CD14-positive monocyte (primary cell): ENCODE measurements at regions of chr14 and their contacts with region 1.

Region 1: GRCh38 chr14:105314287-105315200 is at the start of gene PACS2:
- DNase-seq: peak; percentile 83 to 89 (median 85)
- H3K4me3 ChIP-seq: peak within 1 kb of the TSS; percentile 41 to 79 (median 48)
- H3K4me3 Mint-ChIP-seq: peak within 1 kb of the TSS; percentile 85 to 87
- H3K27ac ChIP-seq: peak within 1 kb of the TSS; percentile 29 to 68
- H3K27ac Mint-ChIP-seq: peak within 1 kb of the TSS in 6 of 7 donors; percentile 41 to 86 (median 77)
- H3K4me1 ChIP-seq: peaks cover 35 to 46% of the 10 kb centered on the region in 2 donors
- H3K4me1 Mint-ChIP-seq: peaks cover 36% of the 10 kb centered on the region
- H3K27me3 ChIP-seq: no peaks in the 10 kb centered on the region
- H3K27me3 Mint-ChIP-seq: peaks cover 3 to 11% (median 4%) of the 10 kb centered on the region in 3 donors
- CTCF ChIP-seq: no peak
- polyA plus RNA-seq, gene PACS2: 3.1 to 87.0 (median 3.7) TPM

Region 2: DNA sequence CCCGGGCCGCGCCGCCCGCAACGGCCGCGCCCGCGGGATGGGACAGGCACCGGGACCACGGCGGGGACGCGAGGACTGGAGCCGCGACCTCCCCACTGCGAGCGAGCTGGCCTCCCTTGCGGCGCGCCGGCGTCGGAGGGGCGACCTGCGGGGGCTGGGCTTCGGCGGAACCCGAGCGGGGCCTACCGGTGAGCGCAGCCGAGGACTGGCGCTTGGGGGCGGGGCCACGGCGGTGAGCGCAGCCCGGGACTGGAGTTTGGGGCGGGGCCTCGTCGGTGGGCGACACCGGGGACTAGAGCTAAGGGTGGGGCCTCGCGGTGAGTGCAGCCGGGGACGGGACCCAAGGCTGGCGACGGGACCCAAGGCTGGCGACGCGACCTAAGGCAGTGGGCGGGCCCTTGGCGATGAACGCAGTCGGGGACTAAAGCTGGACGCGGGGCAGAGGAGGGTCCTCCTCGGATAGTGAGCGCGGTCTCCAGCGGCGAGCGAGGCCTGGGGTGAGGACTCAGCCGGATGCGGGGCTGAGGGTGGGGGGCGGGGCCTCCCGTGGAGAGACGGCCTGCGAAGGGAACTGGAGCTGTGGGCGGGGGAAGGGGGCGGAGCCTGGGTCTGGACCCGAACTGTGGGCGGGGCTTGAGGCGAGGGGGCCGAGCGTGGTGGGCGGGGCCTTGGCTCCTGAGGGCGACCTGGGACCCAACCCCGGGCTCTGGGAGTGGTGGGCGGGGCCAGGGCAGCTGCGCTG is 13.6 kb before region 1 on chr14 and contains the start of gene BRF1:
- intact Hi-C with region 1: loop called in 1 of 2 experiments (anchors 2 kb)
- DNase-seq: peak; percentile 90 to 93 (median 90)
- H3K4me3 ChIP-seq: peak within 1 kb of the TSS; percentile 66 to 87 (median 76)
- H3K4me3 Mint-ChIP-seq: peak within 1 kb of the TSS; percentile 85 to 95
- H3K27ac ChIP-seq: peak within 1 kb of the TSS; percentile 92 to 93
- H3K27ac Mint-ChIP-seq: peak within 1 kb of the TSS; percentile 91 to 98 (median 95)
- H3K4me1 ChIP-seq: peaks cover 32 to 43% of the 10 kb centered on the region in 2 donors
- H3K4me1 Mint-ChIP-seq: peaks cover 45% of the 10 kb centered on the region
- H3K27me3 ChIP-seq: no peaks in the 10 kb centered on the region
- H3K27me3 Mint-ChIP-seq: peaks cover 0 to 2% (median 0%) of the 10 kb centered on the region in 3 donors
- CTCF ChIP-seq: no peak
- polyA plus RNA-seq, gene BRF1: 2.3 to 20.5 (median 2.5) TPM

Region 3: GRCh38 chr14:105527661-105528581 is 213.4 kb after region 1 on chr14:
- intact Hi-C with region 1: no loop called
- DNase-seq: peak; percentile 59 to 74 (median 61)
- H3K4me3 ChIP-seq: peak overlapping the region; percentile 28 to 75 (median 31)
- H3K4me3 Mint-ChIP-seq: peak overlapping the region; percentile 56 to 83
- H3K27ac ChIP-seq: no peak overlapping the region
- H3K27ac Mint-ChIP-seq: no peak overlapping the region
- H3K4me1 ChIP-seq: peaks cover 30 to 35% of the 10 kb centered on the region in 2 donors
- H3K4me1 Mint-ChIP-seq: peaks cover 28% of the 10 kb centered on the region
- H3K27me3 ChIP-seq: peaks cover 36 to 57% of the 10 kb centered on the region in 2 donors
- H3K27me3 Mint-ChIP-seq: peaks cover 46 to 84% (median 60%) of the 10 kb centered on the region in 3 donors
- CTCF ChIP-seq: peak; percentile 93